ENCODE measurements at regions of chr22 and their contacts with region 1.

Region 1: GRCh38 chr22:39927544-39927943 is 26.7 kb downstream of the GRAP2 start:
- DNase-seq: no peak
- ATAC-seq: no peak
- H3K4me3 ChIP-seq: peak overlapping the region; percentile 46 to 86
- H3K4me3 Mint-ChIP-seq: no peak overlapping the region
- H3K27ac ChIP-seq: peak overlapping the region; percentile 22
- H3K27ac Mint-ChIP-seq: no peak overlapping the region
- H3K4me1 ChIP-seq: peaks cover 70 to 83% of the 10 kb centered on the region in 2 experiments
- H3K4me1 Mint-ChIP-seq: peaks cover 40 to 42% (median 41%) of the 10 kb centered on the region in 3 donors
- H3K27me3 ChIP-seq: no peaks in the 10 kb centered on the region
- H3K27me3 Mint-ChIP-seq: no peaks in the 10 kb centered on the region

Region 2: DNA sequence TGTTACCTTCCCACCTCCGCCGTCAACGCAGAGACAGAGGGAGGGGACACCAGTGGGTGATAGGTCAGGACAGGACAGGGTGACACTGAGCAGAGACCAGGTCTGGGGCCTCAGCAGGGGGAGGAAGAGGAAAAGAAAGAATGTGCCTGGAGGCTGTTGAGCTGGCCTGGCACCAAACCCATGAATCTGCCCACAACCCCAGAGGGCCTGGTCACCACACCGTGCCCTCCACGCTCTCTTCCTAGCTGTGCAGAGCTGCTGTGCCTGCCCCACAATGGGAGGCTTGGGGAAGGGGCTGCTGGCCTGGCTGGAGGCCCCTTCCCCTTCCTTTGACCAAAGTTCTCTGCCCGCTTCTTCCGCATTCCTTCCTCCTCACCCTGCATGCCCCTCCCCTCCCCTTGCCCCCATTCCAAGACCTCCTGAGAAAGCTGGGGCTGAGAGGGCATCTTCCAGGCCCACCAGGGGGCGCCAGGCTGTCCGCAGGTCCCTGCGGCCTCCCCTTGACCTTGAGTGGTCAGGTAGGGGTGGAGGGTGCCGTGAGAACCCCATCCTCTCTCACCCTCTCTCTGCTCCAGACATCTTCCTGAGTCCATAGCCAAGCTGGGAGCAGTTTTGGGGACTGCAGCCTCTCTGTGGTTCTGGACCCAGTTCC is 368.0 kb before region 1 on chr22:
- CTCF ChIA-PET with region 1: no interaction called
- POLR2A ChIA-PET with region 1: no interaction called
- DNase-seq: no peak
- ATAC-seq: no peak
- H3K4me3 ChIP-seq: no peak overlapping the region
- H3K4me3 Mint-ChIP-seq: peak overlapping the region in 1 of 3 donors; percentile 26
- H3K27ac ChIP-seq: no peak overlapping the region
- H3K27ac Mint-ChIP-seq: no peak overlapping the region
- H3K4me1 ChIP-seq: peaks cover 0 to 17% of the 10 kb centered on the region in 2 experiments
- H3K4me1 Mint-ChIP-seq: peaks cover 5 to 11% (median 8%) of the 10 kb centered on the region in 3 donors
- H3K27me3 ChIP-seq: peaks cover 0 to 59% of the 10 kb centered on the region in 2 experiments
- H3K27me3 Mint-ChIP-seq: peaks cover 20 to 33% of the 10 kb centered on the region in 2 donors

Region 3: DNA sequence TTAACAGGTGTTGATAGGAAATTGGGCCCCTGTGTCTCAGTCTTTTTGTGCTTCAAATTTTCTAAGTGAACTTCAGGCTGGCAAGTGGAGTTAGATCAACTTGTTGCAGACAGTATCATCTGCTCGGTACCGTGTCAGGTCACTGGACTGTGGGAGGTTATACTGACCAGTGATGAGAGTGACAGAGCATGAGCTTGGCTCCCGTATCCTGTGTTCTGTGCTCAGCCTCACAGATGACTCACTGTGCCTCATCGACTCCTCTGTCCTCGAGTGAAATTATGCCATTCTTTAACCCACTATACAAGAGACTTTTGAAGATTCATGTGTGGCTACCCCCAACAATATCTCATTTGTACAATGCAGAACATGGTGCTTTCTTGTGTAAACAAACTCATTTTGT is 18.8 kb before region 1 on chr22:
- CTCF ChIA-PET with region 1: interaction called, 8 to 10 read pairs
- POLR2A ChIA-PET with region 1: interaction called, 8 to 13 read pairs
- DNase-seq: peak in 2 of 35 experiments; percentile 37 to 61
- ATAC-seq: peak; percentile 26 to 63 (median 50)
- H3K4me3 ChIP-seq: peak overlapping the region; percentile 58 to 72
- H3K4me3 Mint-ChIP-seq: peak overlapping the region; percentile 84 to 98 (median 97)
- H3K27ac ChIP-seq: peak overlapping the region; percentile 87
- H3K27ac Mint-ChIP-seq: peak overlapping the region; percentile 93 to 97
- H3K4me1 ChIP-seq: peaks cover 54 to 64% of the 10 kb centered on the region in 2 experiments
- H3K4me1 Mint-ChIP-seq: peaks cover 72 to 91% (median 82%) of the 10 kb centered on the region in 3 donors
- H3K27me3 ChIP-seq: no peaks in the 10 kb centered on the region
- H3K27me3 Mint-ChIP-seq: no peaks in the 10 kb centered on the region

Region 4: GRCh38 chr22:39943337-39943736 is 15.8 kb after region 1 on chr22:
- CTCF ChIA-PET with region 1: interaction called in 1 of 2 experiments, 25 read pairs
- POLR2A ChIA-PET with region 1: interaction called in 1 of 2 experiments, 3 read pairs
- DNase-seq: peak in 13 of 35 experiments; percentile 26 to 64 (median 39)
- ATAC-seq: peak in 3 of 4 experiments; percentile 19 to 32 (median 25)
- H3K4me3 ChIP-seq: peak overlapping the region in 1 of 2 donors; percentile 38
- H3K4me3 Mint-ChIP-seq: peak overlapping the region in 2 of 3 donors; percentile 25 to 59
- H3K27ac ChIP-seq: peak overlapping the region; percentile 79
- H3K27ac Mint-ChIP-seq: peak overlapping the region in 1 of 2 donors; percentile 95
- H3K4me1 ChIP-seq: peaks cover 82 to 97% of the 10 kb centered on the region in 2 experiments
- H3K4me1 Mint-ChIP-seq: peaks cover 95 to 97% (median 97%) of the 10 kb centered on the region in 3 donors
- H3K27me3 ChIP-seq: no peaks in the 10 kb centered on the region
- H3K27me3 Mint-ChIP-seq: no peaks in the 10 kb centered on the region

Region 5: DNA sequence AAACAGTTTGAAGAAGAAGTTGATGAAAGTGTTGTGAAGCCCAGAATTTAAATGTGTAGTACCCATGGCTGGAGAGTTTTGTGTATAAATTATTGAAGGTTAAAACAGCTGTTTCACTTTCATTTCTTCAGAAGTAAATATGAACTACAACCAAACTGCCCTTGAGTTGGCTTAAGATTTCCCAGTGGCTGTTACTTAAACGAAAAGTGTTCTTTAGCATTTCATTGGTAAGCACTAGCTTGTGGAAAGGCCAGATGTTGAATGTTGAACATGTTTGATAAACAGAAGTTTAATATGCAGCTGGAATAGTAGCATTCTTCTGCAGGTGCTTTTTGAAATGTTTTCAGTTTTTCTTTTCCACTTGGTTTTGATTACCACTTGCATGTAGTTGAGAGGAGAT is 166.9 kb after region 1 on chr22:
- CTCF ChIA-PET with region 1: no interaction called
- POLR2A ChIA-PET with region 1: no interaction called
- DNase-seq: peak in 1 of 35 experiments; percentile 33
- ATAC-seq: peak in 1 of 4 experiments; percentile 51
- H3K4me3 ChIP-seq: no peak overlapping the region
- H3K4me3 Mint-ChIP-seq: peak overlapping the region; percentile 46 to 56 (median 50)
- H3K27ac ChIP-seq: no peak overlapping the region
- H3K27ac Mint-ChIP-seq: peak overlapping the region; percentile 32 to 52
- H3K4me1 ChIP-seq: peaks cover 16 to 37% of the 10 kb centered on the region in 2 experiments
- H3K4me1 Mint-ChIP-seq: peaks cover 75 to 79% (median 76%) of the 10 kb centered on the region in 3 donors
- H3K27me3 ChIP-seq: no peaks in the 10 kb centered on the region
- H3K27me3 Mint-ChIP-seq: no peaks in the 10 kb centered on the region